ENCODE measurements at regions of chr2 and their contacts with region 1.

Region 1: GRCh38 chr2:207143215-207144172 is 22.3 kb downstream of the KLF7 start:
- DNase-seq: peak; percentile 34 to 92 (median 83)
- ATAC-seq: peak; percentile 83
- H3K4me3 ChIP-seq: peak overlapping the region; percentile 57
- H3K4me3 Mint-ChIP-seq: peak overlapping the region; percentile 59 to 90 (median 80)
- H3K27ac ChIP-seq: peak overlapping the region; percentile 86
- H3K27ac Mint-ChIP-seq: peak overlapping the region; percentile 92 to 99 (median 96)
- H3K4me1 ChIP-seq: peaks cover 17 to 51% of the 10 kb centered on the region in 2 donors
- H3K4me1 Mint-ChIP-seq: peaks cover 45 to 95% (median 87%) of the 10 kb centered on the region in 7 donors
- H3K27me3 ChIP-seq: no peaks in the 10 kb centered on the region
- H3K27me3 Mint-ChIP-seq: no peaks in the 10 kb centered on the region

Region 2: DNA sequence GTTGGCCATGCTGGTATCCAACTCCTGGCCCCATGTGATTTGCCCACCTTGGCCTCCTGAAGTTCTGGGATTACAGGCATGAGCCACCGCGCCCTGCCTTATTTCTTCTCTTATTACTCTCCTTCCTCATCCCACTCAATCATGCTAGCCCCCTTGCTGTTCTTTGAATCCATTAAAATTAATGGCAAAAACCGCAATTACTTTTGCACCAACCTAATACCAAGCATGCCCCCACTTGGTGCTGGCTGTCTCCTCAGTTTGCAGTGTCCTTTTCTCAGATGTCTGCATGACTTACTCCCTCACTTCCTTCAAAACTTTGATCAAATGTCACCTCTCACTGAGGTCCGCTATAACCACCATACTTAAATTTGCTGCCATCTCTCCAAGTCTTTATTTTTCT is 459.9 kb before region 1 on chr2:
- CTCF ChIA-PET with region 1: no interaction called
- POLR2A ChIA-PET with region 1: no interaction called
- intact Hi-C with region 1: no loop called
- DNase-seq: no peak
- ATAC-seq: no peak
- H3K4me3 ChIP-seq: no peak overlapping the region
- H3K4me3 Mint-ChIP-seq: no peak overlapping the region
- H3K27ac ChIP-seq: no peak overlapping the region
- H3K27ac Mint-ChIP-seq: no peak overlapping the region
- H3K4me1 ChIP-seq: no peaks in the 10 kb centered on the region
- H3K4me1 Mint-ChIP-seq: no peaks in the 10 kb centered on the region
- H3K27me3 ChIP-seq: no peaks in the 10 kb centered on the region
- H3K27me3 Mint-ChIP-seq: peaks cover 0 to 38% (median 10%) of the 10 kb centered on the region in 5 donors

Region 3: GRCh38 chr2:206962966-206963365 is 180.5 kb before region 1 on chr2:
- CTCF ChIA-PET with region 1: no interaction called
- POLR2A ChIA-PET with region 1: no interaction called
- intact Hi-C with region 1: no loop called
- DNase-seq: no peak
- ATAC-seq: no peak
- H3K4me3 ChIP-seq: no peak overlapping the region
- H3K4me3 Mint-ChIP-seq: no peak overlapping the region
- H3K27ac ChIP-seq: no peak overlapping the region
- H3K27ac Mint-ChIP-seq: peak overlapping the region in 1 of 9 donors; percentile 34
- H3K4me1 ChIP-seq: no peaks in the 10 kb centered on the region
- H3K4me1 Mint-ChIP-seq: no peaks in the 10 kb centered on the region
- H3K27me3 ChIP-seq: no peaks in the 10 kb centered on the region
- H3K27me3 Mint-ChIP-seq: no peaks in the 10 kb centered on the region

Region 4: DNA sequence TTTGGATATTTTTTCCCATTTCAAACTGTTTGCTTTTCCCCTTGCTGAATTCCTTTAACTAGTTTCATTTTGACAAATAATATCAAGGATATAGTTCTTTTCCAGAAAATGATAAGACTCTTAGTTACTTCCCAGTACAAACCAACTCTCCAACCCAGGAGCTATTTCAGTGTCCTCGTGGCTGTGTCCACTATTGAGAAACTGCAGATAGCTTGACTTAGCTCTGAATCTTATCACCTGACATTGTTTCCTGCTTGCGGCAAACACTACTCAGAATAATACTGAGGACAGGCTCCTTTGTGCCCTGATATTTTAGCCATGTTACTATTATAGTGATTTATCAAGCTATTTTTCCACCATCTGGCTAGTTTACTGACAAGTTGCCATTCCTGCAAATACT is 52.3 kb before region 1 on chr2:
- CTCF ChIA-PET with region 1: interaction called, 3 read pairs
- POLR2A ChIA-PET with region 1: interaction called, 5 read pairs
- intact Hi-C with region 1: loop called in 1 of 2 experiments (anchors 2 kb)
- DNase-seq: no peak
- ATAC-seq: no peak
- H3K4me3 ChIP-seq: no peak overlapping the region
- H3K4me3 Mint-ChIP-seq: peak overlapping the region in 1 of 10 donors; percentile 6
- H3K27ac ChIP-seq: no peak overlapping the region
- H3K27ac Mint-ChIP-seq: peak overlapping the region in 1 of 9 donors; percentile 41
- H3K4me1 ChIP-seq: peaks cover 0 to 41% of the 10 kb centered on the region in 2 donors
- H3K4me1 Mint-ChIP-seq: peaks cover 29 to 71% (median 64%) of the 10 kb centered on the region in 7 donors
- H3K27me3 ChIP-seq: no peaks in the 10 kb centered on the region
- H3K27me3 Mint-ChIP-seq: no peaks in the 10 kb centered on the region

Region 5: DNA sequence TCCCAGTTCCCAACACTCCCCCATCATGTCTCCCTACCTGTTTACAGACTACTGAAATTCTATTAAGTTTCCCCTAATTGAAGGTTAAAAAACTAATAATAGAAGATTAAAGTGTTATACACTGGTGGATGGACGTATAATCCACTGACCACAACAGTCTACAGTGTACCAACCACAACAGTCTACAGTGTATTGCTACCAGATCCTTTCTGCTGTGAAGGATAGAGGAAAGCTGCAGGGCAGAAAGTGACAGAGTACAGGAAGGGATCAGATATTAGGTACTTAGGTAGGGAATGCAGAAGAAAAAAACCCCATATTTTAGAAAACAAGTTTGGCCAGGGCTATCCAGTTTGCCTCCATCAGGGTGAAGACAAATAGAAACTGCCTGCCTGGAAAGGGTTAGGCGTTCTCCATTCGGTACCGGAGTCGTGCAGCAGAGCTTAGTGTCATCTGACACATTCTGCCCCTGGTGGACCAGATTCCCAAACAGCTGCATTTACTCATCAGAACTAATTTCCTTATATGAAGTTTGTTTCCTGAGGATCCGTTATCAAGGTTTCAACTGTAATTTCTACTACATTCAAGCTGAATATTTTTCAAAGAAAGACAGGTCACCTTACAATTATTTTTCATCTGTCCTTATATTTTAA is 27.7 kb before region 1 on chr2:
- CTCF ChIA-PET with region 1: no interaction called
- POLR2A ChIA-PET with region 1: interaction called, 18 read pairs
- intact Hi-C with region 1: no loop called
- DNase-seq: no peak
- ATAC-seq: no peak
- H3K4me3 ChIP-seq: no peak overlapping the region
- H3K4me3 Mint-ChIP-seq: no peak overlapping the region
- H3K27ac ChIP-seq: no peak overlapping the region
- H3K27ac Mint-ChIP-seq: no peak overlapping the region
- H3K4me1 ChIP-seq: peaks cover 0 to 7% of the 10 kb centered on the region in 2 donors
- H3K4me1 Mint-ChIP-seq: peaks cover 15 to 88% (median 56%) of the 10 kb centered on the region in 7 donors
- H3K27me3 ChIP-seq: no peaks in the 10 kb centered on the region
- H3K27me3 Mint-ChIP-seq: no peaks in the 10 kb centered on the region

Region 6: GRCh38 chr2:207156451-207157161 is 13.1 kb after region 1 on chr2:
- CTCF ChIA-PET with region 1: interaction called, 7 read pairs
- POLR2A ChIA-PET with region 1: interaction called, 77 read pairs
- intact Hi-C with region 1: loop called (anchors 1 kb)
- DNase-seq: no peak
- ATAC-seq: no peak
- H3K4me3 ChIP-seq: no peak overlapping the region
- H3K4me3 Mint-ChIP-seq: peak overlapping the region; percentile 45 to 85 (median 79)
- H3K27ac ChIP-seq: no peak overlapping the region
- H3K27ac Mint-ChIP-seq: peak overlapping the region; percentile 3 to 99 (median 84)
- H3K4me1 ChIP-seq: peaks cover 0 to 53% of the 10 kb centered on the region in 2 donors
- H3K4me1 Mint-ChIP-seq: peaks cover 62 to 100% (median 98%) of the 10 kb centered on the region in 7 donors
- H3K27me3 ChIP-seq: no peaks in the 10 kb centered on the region
- H3K27me3 Mint-ChIP-seq: no peaks in the 10 kb centered on the region

Region 7: DNA sequence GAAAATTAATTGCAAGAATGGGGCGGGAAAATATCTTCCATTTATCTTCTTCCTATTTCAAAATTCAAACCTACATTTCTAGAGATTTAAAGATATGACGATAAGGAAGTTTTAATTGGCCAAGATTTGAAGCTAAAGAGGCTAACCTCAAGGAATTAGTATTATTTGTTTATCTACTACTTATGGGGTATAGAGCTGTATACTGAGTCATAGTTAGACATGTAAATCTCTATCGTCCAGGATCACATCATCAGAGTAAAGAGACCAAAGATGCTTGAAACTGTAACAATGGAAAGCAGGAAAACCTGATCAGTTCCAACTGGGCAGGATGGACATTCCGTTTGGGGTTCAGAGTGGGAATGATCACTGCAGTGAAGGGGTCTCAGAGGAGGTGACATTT is 117.5 kb after region 1 on chr2:
- CTCF ChIA-PET with region 1: no interaction called
- POLR2A ChIA-PET with region 1: interaction called, 3 read pairs
- intact Hi-C with region 1: loop called in 1 of 2 experiments (anchors 5 kb)
- DNase-seq: no peak
- ATAC-seq: no peak
- H3K4me3 ChIP-seq: no peak overlapping the region
- H3K4me3 Mint-ChIP-seq: no peak overlapping the region
- H3K27ac ChIP-seq: no peak overlapping the region
- H3K27ac Mint-ChIP-seq: no peak overlapping the region
- H3K4me1 ChIP-seq: no peaks in the 10 kb centered on the region
- H3K4me1 Mint-ChIP-seq: no peaks in the 10 kb centered on the region
- H3K27me3 ChIP-seq: no peaks in the 10 kb centered on the region
- H3K27me3 Mint-ChIP-seq: peaks cover 0 to 4% (median 0%) of the 10 kb centered on the region in 5 donors

Region 8: GRCh38 chr2:207473049-207473930 is 329.8 kb after region 1 on chr2:
- CTCF ChIA-PET with region 1: interaction called, 5 read pairs
- POLR2A ChIA-PET with region 1: no interaction called
- intact Hi-C with region 1: loop called (anchors 1 to 2 kb)
- DNase-seq: peak in 8 of 9 donors; percentile 25 to 68 (median 52)
- ATAC-seq: peak; percentile 76
- H3K4me3 ChIP-seq: no peak overlapping the region
- H3K4me3 Mint-ChIP-seq: peak overlapping the region in 4 of 10 donors; percentile 20 to 52 (median 42)
- H3K27ac ChIP-seq: no peak overlapping the region
- H3K27ac Mint-ChIP-seq: peak overlapping the region in 7 of 9 donors; percentile 14 to 71 (median 48)
- H3K4me1 ChIP-seq: no peaks in the 10 kb centered on the region
- H3K4me1 Mint-ChIP-seq: peaks cover 6 to 23% (median 18%) of the 10 kb centered on the region in 7 donors
- H3K27me3 ChIP-seq: no peaks in the 10 kb centered on the region
- H3K27me3 Mint-ChIP-seq: peaks cover 0 to 4% (median 0%) of the 10 kb centered on the region in 5 donors

Region 9: DNA sequence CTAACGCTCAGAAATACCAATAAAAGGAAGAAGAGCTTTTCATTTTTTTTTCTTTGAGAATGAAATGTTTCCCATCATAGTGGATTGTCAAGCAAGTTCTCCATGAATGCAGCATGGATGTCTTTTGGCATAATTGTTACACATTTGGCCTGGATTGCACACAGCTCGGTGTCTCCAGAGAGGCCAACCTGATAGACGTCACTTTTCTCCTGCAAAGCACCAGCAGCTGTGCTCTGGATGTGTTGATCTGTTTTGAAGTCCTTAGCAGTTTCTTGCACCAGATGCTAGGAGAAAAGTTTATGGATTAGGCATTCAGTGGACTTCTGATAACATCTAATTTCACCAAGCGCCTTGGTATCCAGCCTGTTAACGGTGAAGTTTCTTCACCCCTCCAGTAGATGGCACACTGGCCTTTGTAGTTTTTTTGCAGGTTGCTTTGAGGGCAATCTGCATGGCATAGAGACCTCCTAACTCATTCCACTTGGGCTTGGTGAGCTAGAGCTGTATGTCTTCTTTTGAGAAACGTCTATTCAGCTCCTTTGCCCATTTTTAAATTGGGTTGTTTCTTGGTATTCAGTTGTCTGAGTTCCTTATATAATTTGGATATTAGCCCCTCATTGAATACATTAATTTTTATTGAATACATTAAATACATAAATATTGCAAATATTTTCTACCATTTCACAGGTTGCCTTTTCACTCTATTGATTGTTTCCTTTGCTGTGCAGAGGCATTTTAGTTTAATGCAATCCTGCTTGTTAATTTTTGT is 1322.8 kb after region 1 on chr2:
- CTCF ChIA-PET with region 1: no interaction called
- POLR2A ChIA-PET with region 1: no interaction called
- intact Hi-C with region 1: no loop called
- DNase-seq: no peak
- ATAC-seq: no peak
- H3K4me3 ChIP-seq: no peak overlapping the region
- H3K4me3 Mint-ChIP-seq: no peak overlapping the region
- H3K27ac ChIP-seq: no peak overlapping the region
- H3K27ac Mint-ChIP-seq: no peak overlapping the region
- H3K4me1 ChIP-seq: no peaks in the 10 kb centered on the region
- H3K4me1 Mint-ChIP-seq: no peaks in the 10 kb centered on the region
- H3K27me3 ChIP-seq: no peaks in the 10 kb centered on the region
- H3K27me3 Mint-ChIP-seq: peaks cover 2 to 17% (median 7%) of the 10 kb centered on the region in 5 donors

Measured in naive thymus-derived CD4-positive, alpha-beta T cell (primary cell).